Stomach (tissue), 19 donors: ENCODE measurements at regions of chr3 and their contacts with region 1.

Region 1: DNA sequence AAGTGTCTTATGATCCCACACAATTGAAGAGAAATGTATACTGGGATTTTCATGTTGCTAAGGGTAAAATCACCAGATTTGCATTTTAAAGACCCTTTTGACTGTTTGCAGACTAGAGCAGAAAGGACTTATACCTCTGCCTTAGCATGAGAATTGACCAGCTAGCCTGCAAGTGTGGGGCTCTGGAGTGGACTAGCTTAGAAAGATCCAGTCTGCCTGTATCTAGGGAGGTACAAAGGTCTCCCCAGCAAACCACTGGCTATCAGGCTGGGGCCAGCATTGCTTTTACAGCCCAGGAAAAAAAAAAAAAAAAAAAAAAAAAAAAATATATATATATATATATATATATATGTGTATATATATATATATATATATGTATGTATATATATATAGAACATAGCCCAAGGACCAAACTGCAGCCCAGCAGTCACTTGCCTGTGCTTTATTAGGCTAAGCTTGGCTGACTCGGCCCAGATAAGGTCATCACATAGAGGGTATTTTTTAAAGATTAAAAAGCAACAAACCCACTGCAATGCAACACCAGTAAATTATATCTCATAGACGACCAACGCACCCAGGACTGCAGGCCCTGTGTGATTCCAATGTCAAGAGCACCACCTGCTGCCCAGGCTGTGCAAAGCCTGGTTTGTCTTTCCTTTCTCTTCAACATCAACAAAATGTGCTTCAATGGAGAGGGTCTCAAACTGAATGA is 63.7 kb downstream of the DCLK3 start:
- DNase-seq: peak in 1 of 2 donors; percentile 89
- H3K4me3 ChIP-seq: no peak overlapping the region
- H3K27ac ChIP-seq: no peak overlapping the region
- H3K4me1 ChIP-seq: no peaks in the 10 kb centered on the region
- H3K27me3 ChIP-seq: no peaks in the 10 kb centered on the region
- CTCF ChIP-seq: peak in 5 of 7 experiments; percentile 35 to 53 (median 44)
- EP300 ChIP-seq: no peak
- POLR2A ChIP-seq: no peak

Region 2: GRCh38 chr3:35965908-35966307 is 734.8 kb before region 1 on chr3:
- intact Hi-C with region 1: loop called (anchors 5 kb)
- DNase-seq: peak in 1 of 2 donors; percentile 70
- H3K4me3 ChIP-seq: no peak overlapping the region
- H3K27ac ChIP-seq: no peak overlapping the region
- H3K4me1 ChIP-seq: peaks cover 0 to 8% (median 1%) of the 10 kb centered on the region in 4 donors
- H3K27me3 ChIP-seq: no peaks in the 10 kb centered on the region
- CTCF ChIP-seq: no peak
- EP300 ChIP-seq: no peak
- POLR2A ChIP-seq: no peak

Region 3: DNA sequence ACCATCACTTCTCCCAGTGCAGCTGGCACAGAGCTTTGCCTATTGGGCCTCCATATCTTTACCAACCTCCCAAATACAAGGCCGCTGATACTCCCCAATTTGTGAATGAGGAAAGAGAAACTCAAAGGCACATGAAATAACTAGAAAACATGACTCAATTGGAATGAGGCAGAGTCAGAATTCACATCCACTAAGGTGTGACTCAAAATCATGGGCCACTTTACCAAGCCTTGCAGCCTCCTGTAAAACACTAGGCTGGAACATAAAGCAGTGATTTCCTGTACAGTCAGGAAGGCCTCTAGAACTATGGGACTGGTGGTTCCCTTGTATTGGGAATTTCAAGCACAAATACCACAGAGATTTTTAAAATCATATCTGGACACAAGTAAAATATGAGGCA is 65.0 kb before region 1 on chr3:
- intact Hi-C with region 1: no loop called
- DNase-seq: no peak
- H3K4me3 ChIP-seq: no peak overlapping the region
- H3K27ac ChIP-seq: no peak overlapping the region
- H3K4me1 ChIP-seq: no peaks in the 10 kb centered on the region
- H3K27me3 ChIP-seq: no peaks in the 10 kb centered on the region
- CTCF ChIP-seq: no peak
- EP300 ChIP-seq: no peak
- POLR2A ChIP-seq: no peak